CD8-positive, alpha-beta T cell (primary cell): ENCODE measurements at regions of chr1 and their contacts with region 1.

Region 1: GRCh38 chr1:37692078-37692833 is at the start of gene CDCA8:
- DNase-seq: peak; percentile 97 to 99 (median 99)
- ATAC-seq: peak; percentile 88
- H3K4me3 ChIP-seq: peak within 1 kb of the TSS; percentile 73 to 90
- H3K4me3 Mint-ChIP-seq: peak within 1 kb of the TSS; percentile 88
- H3K27ac ChIP-seq: peak within 1 kb of the TSS; percentile 54 to 57
- H3K27ac Mint-ChIP-seq: peak within 1 kb of the TSS; percentile 90
- H3K4me1 ChIP-seq: peaks cover 28% of the 10 kb centered on the region
- H3K4me1 Mint-ChIP-seq: peaks cover 39% of the 10 kb centered on the region
- H3K27me3 ChIP-seq: no peaks in the 10 kb centered on the region
- H3K27me3 Mint-ChIP-seq: no peaks in the 10 kb centered on the region
- CTCF ChIP-seq: peak; percentile 42
- total RNA-seq, gene CDCA8: 0.25 to 0.62 TPM

Region 2: DNA sequence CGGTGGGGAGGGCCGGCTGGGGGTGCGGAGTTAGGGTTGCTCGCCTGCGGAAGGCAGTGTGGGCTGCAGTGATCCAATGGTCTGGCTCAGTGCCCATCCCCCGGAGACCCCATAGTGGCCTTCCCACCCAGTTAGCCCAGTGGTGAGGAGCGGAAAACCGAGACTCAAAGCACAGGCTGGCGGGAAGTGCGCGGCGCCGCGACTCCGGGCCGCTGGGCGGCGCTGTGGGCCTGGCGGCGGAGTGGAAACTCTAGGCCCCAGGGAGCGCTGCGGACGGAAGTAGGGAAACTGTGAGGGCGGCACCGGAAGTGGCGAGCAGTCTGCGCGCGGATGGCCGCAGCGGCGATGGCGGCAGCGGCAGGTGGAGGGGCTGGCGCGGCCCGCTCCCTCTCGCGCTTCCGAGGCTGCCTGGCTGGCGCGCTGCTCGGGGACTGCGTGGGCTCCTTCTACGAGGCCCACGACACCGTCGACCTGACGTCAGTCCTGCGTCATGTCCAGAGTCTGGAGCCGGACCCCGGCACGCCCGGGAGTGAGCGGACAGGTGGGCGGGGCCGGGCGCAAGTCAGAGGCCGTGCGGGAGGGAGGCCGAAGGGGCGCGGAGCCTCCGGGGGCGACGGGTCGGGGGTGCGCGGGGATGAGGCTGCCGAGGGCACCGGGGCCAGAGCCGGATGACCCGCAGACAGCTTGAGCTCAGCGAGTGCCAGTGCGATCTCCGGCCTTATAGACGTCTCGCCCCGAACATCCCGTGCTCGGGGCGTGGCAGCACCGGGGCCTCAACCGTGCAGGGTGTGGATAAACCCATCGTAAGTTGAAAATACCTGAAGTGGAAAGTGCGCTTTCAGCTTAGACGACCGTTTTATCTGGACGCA is 1603.4 kb before region 1 on chr1 and contains the start of gene ADPRS:
- CTCF ChIA-PET with region 1: no interaction called
- POLR2A ChIA-PET with region 1: no interaction called
- intact Hi-C with region 1: loop called in 1 of 2 experiments (anchors 10 kb)
- DNase-seq: peak; percentile 81 to 96 (median 91)
- ATAC-seq: peak; percentile 89
- H3K4me3 ChIP-seq: peak within 1 kb of the TSS; percentile 89 to 98
- H3K4me3 Mint-ChIP-seq: peak within 1 kb of the TSS; percentile 90
- H3K27ac ChIP-seq: peak within 1 kb of the TSS; percentile 84 to 95
- H3K27ac Mint-ChIP-seq: peak within 1 kb of the TSS; percentile 94
- H3K4me1 ChIP-seq: peaks cover 24% of the 10 kb centered on the region
- H3K4me1 Mint-ChIP-seq: peaks cover 25% of the 10 kb centered on the region
- H3K27me3 ChIP-seq: peaks cover 5 to 6% of the 10 kb centered on the region in 2 experiments
- H3K27me3 Mint-ChIP-seq: peaks cover 15% of the 10 kb centered on the region
- CTCF ChIP-seq: peak; percentile 98
- total RNA-seq, gene ADPRS: 26.2 to 26.7 TPM

Region 3: DNA sequence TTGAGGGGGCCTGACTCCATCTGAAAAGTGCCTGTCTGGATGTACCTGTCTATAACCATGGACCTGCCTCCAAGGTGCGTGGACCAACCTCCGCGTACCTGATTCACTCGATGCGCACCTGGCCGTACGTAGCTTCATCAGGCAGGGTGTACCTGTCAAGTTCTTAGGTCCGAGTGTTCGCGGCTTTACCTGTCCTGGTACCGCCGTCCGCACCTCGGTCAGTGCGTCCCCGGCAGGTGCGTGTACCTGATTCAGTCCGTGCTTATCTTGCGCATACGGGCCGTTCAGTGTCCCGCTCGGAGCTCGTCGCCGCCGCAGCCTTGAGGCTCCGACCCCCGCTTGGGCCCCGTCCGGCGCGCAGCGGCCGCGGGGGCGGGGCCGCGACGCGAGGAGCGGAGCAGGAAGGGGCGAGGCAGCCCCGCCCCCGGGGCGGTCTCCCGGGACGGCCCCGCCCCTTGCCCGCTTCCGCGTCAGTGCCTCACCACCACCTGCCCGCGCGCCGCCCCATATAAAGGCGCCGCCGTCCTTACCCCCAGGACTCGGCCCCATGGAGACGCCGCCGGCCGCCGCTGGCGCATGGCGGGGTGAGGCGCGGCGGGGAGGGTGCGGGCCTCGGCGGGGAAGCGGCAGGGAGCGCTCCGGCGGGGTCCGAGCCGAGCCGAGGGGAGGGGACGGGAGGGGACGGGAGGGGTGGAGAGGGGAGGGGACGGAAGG is 218.1 kb before region 1 on chr1 and contains the start of gene ZC3H12A:
- CTCF ChIA-PET with region 1: interaction called, 4 read pairs
- POLR2A ChIA-PET with region 1: interaction called, 3 read pairs
- intact Hi-C with region 1: loop called (anchors 1 kb)
- DNase-seq: peak; percentile 86 to 97 (median 92)
- ATAC-seq: peak; percentile 57
- H3K4me3 ChIP-seq: peak within 1 kb of the TSS; percentile 93 to 95
- H3K4me3 Mint-ChIP-seq: peak within 1 kb of the TSS; percentile 95
- H3K27ac ChIP-seq: peak within 1 kb of the TSS; percentile 95 to 99
- H3K27ac Mint-ChIP-seq: peak within 1 kb of the TSS; percentile 99
- H3K4me1 ChIP-seq: peaks cover 43% of the 10 kb centered on the region
- H3K4me1 Mint-ChIP-seq: peaks cover 59% of the 10 kb centered on the region
- H3K27me3 ChIP-seq: no peaks in the 10 kb centered on the region
- H3K27me3 Mint-ChIP-seq: no peaks in the 10 kb centered on the region
- CTCF ChIP-seq: no peak
- total RNA-seq, gene ZC3H12A: 202 to 205 TPM

Region 4: DNA sequence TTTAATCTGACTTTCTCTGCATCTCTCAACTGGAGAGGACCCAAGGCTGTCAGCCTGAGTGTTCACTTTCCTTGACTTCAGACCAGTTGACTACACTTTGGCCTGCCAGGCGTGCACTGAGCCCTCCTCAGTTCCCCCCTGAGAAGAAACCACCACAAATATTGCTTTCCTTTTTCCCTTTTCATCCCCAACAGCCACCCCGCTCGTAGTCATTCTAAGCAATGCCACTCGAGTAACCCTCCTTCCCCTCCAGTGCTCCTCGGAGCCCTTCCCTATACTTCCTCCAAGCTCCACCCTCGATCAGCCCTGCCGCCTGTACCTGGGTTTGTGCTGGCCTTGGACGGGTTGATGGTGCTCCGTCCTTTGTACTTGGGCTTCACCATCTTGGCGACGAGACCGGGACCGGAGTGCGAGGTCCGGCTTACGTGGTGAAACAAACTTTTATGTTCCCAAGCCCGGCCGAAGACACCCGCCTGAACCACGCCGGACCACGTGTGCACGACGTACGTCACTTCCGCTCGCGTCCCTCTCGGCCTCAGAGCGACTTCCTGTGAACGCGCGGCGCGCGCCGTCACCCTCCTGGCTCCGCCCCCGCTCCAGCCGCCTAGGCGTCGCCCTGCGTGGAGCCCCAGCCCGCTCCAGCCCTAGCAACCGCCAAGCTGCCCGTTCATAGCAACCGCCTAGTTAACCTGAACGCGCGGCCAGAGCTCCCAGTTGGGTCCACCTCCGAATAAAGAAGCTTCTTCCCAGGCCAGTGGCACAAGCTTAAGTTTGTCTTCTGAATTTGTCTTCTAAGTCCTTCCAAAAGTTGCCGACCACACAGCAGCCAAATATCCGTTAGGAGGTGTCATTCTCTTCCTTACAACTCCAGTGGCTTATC is 96.6 kb before region 1 on chr1 and contains the start of gene GNL2:
- CTCF ChIA-PET with region 1: interaction called, 5 read pairs
- POLR2A ChIA-PET with region 1: interaction called, 5 read pairs
- intact Hi-C with region 1: loop called (anchors 1 kb)
- DNase-seq: peak; percentile 92 to 99 (median 96)
- ATAC-seq: peak; percentile 95
- H3K4me3 ChIP-seq: peak within 1 kb of the TSS; percentile 67 to 88
- H3K4me3 Mint-ChIP-seq: peak within 1 kb of the TSS; percentile 100
- H3K27ac ChIP-seq: peak within 1 kb of the TSS; percentile 68 to 93
- H3K27ac Mint-ChIP-seq: peak within 1 kb of the TSS; percentile 99
- H3K4me1 ChIP-seq: peaks cover 23% of the 10 kb centered on the region
- H3K4me1 Mint-ChIP-seq: peaks cover 36% of the 10 kb centered on the region
- H3K27me3 ChIP-seq: no peaks in the 10 kb centered on the region
- H3K27me3 Mint-ChIP-seq: no peaks in the 10 kb centered on the region
- CTCF ChIP-seq: no peak
- total RNA-seq, gene GNL2: 54.6 to 55.2 TPM

Region 5: GRCh38 chr1:37859507-37860345 is 167.5 kb after region 1 on chr1 and contains the start of gene MTF1:
- CTCF ChIA-PET with region 1: interaction called, 8 read pairs
- POLR2A ChIA-PET with region 1: interaction called, 3 read pairs
- intact Hi-C with region 1: loop called (anchors 1 kb)
- DNase-seq: peak; percentile 91 to 99 (median 96)
- ATAC-seq: peak; percentile 99
- H3K4me3 ChIP-seq: peak within 1 kb of the TSS; percentile 88 to 99
- H3K4me3 Mint-ChIP-seq: peak within 1 kb of the TSS; percentile 98
- H3K27ac ChIP-seq: peak within 1 kb of the TSS; percentile 94 to 96
- H3K27ac Mint-ChIP-seq: peak within 1 kb of the TSS; percentile 94
- H3K4me1 ChIP-seq: peaks cover 19% of the 10 kb centered on the region
- H3K4me1 Mint-ChIP-seq: peaks cover 34% of the 10 kb centered on the region
- H3K27me3 ChIP-seq: no peaks in the 10 kb centered on the region
- H3K27me3 Mint-ChIP-seq: no peaks in the 10 kb centered on the region
- CTCF ChIP-seq: peak; percentile 79
- total RNA-seq, gene MTF1: 30.3 to 30.8 TPM

Region 6: GRCh38 chr1:37989361-37989930 is 297.2 kb after region 1 on chr1:
- CTCF ChIA-PET with region 1: interaction called, 3 read pairs
- POLR2A ChIA-PET with region 1: no interaction called
- intact Hi-C with region 1: loop called in 1 of 2 experiments (anchors 5 kb)
- DNase-seq: peak in 5 of 9 experiments; percentile 32 to 60 (median 48)
- ATAC-seq: peak; percentile 35
- H3K4me3 ChIP-seq: peak overlapping the region; percentile 61 to 84
- H3K4me3 Mint-ChIP-seq: peak overlapping the region; percentile 99
- H3K27ac ChIP-seq: peak overlapping the region; percentile 56 to 71
- H3K27ac Mint-ChIP-seq: peak overlapping the region; percentile 95
- H3K4me1 ChIP-seq: peaks cover 15% of the 10 kb centered on the region
- H3K4me1 Mint-ChIP-seq: peaks cover 26% of the 10 kb centered on the region
- H3K27me3 ChIP-seq: no peaks in the 10 kb centered on the region
- H3K27me3 Mint-ChIP-seq: no peaks in the 10 kb centered on the region
- CTCF ChIP-seq: no peak